ENCODE measurements at regions of chr6 and their contacts with region 1.

Region 1: GRCh38 chr6:150119173-150119572 is 23.7 kb upstream of the PPP1R14C start:
- DNase-seq: no peak
- ATAC-seq: no peak
- H3K4me3 ChIP-seq: no peak overlapping the region
- H3K4me3 Mint-ChIP-seq: no peak overlapping the region
- H3K27ac ChIP-seq: no peak overlapping the region
- H3K27ac Mint-ChIP-seq: no peak overlapping the region
- H3K4me1 ChIP-seq: peaks cover 0 to 2% of the 10 kb centered on the region in 2 experiments
- H3K4me1 Mint-ChIP-seq: peaks cover 4 to 15% (median 7%) of the 10 kb centered on the region in 3 donors
- H3K27me3 ChIP-seq: peaks cover 0 to 11% of the 10 kb centered on the region in 2 experiments
- H3K27me3 Mint-ChIP-seq: peaks cover 9 to 12% of the 10 kb centered on the region in 2 donors

Region 2: GRCh38 chr6:150068720-150069648 is 50.2 kb before region 1 on chr6 and contains the start of gene ULBP3:
- CTCF ChIA-PET with region 1: no interaction called
- POLR2A ChIA-PET with region 1: no interaction called
- DNase-seq: peak in 34 of 35 experiments; percentile 21 to 75 (median 43)
- ATAC-seq: peak; percentile 82 to 89 (median 83)
- H3K4me3 ChIP-seq: peak within 1 kb of the TSS; percentile 79 to 85
- H3K4me3 Mint-ChIP-seq: peak within 1 kb of the TSS; percentile 82 to 91 (median 82)
- H3K27ac ChIP-seq: no peak within 1 kb of the TSS
- H3K27ac Mint-ChIP-seq: no peak within 1 kb of the TSS
- H3K4me1 ChIP-seq: peaks cover 2 to 41% of the 10 kb centered on the region in 2 experiments
- H3K4me1 Mint-ChIP-seq: peaks cover 14 to 34% (median 19%) of the 10 kb centered on the region in 3 donors
- H3K27me3 ChIP-seq: peaks cover 0 to 29% of the 10 kb centered on the region in 2 experiments
- H3K27me3 Mint-ChIP-seq: peaks cover 9 to 15% of the 10 kb centered on the region in 2 donors
- total RNA-seq, gene ULBP3: 0.35 to 1.3 (median 0.79) TPM

Region 3: GRCh38 chr6:150194195-150194594 is 75.0 kb after region 1 on chr6:
- CTCF ChIA-PET with region 1: interaction called in 1 of 2 experiments, 12 read pairs
- POLR2A ChIA-PET with region 1: no interaction called
- DNase-seq: no peak
- ATAC-seq: no peak
- H3K4me3 ChIP-seq: no peak overlapping the region
- H3K4me3 Mint-ChIP-seq: no peak overlapping the region
- H3K27ac ChIP-seq: no peak overlapping the region
- H3K27ac Mint-ChIP-seq: no peak overlapping the region
- H3K4me1 ChIP-seq: no peaks in the 10 kb centered on the region
- H3K4me1 Mint-ChIP-seq: no peaks in the 10 kb centered on the region
- H3K27me3 ChIP-seq: peaks cover 0 to 14% of the 10 kb centered on the region in 2 experiments
- H3K27me3 Mint-ChIP-seq: peaks cover 23 to 24% of the 10 kb centered on the region in 2 donors

Measured in T-cell (primary cell).